H1 (cell line): ENCODE measurements at regions of chr5 and their contacts with region 1.

Region 1: DNA sequence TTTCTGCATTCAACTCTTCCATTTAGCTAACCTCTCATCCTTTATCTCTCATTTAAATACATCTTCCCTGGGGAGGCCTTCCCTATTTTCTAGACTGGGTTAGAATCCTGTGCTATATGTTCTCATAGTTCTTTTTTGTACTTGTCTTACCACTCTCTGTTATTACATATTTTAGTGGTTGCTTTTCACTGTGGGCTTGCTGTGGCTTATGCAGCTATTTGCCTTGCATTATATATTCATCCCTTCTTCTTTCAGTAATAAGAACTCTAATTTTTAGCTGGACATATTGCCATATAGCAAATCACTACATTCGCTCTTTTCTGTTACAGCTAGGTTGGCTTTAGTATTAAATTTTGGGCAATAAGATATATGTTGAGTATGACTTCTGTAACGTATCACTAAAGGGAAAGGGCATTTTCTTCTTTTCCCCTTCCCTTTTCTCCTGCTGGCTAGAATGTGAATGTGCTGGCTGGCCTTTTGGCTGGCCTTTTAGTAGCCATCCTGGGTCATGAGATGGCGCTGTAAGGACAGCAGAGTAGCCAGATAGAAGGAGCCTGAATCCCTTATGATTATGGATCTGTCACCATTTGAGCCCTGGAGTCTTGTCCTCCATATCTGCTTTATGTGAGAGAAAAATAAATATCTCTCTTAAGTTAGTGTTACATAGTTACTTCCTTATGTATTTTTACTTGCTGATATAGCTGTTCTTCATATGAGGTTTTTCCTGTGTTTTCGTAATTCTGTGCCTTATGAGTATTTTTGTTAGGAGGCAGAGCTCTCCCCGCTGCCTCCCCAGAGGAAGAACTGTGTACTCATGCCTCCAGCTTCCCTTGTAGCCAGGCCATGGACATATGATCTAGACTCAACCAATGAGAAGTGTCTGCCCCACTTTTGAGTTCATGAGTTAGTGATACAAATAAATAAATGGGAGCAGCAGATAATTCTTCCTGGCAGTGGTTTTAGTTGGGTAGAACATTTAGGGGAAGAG is 65.8 kb downstream of the NDUFAF2 start:
- DNase-seq: peak in 1 of 2 experiments; percentile 13
- H3K4me3 ChIP-seq: no peak overlapping the region
- H3K27ac ChIP-seq: no peak overlapping the region
- H3K4me1 ChIP-seq: no peaks in the 10 kb centered on the region
- H3K27me3 ChIP-seq: no peaks in the 10 kb centered on the region
- CTCF ChIP-seq: peak; percentile 58 to 98 (median 89)
- EP300 ChIP-seq: no peak
- POLR2A ChIP-seq: no peak
- RAD21 ChIP-seq: peak; percentile 76 to 80

Region 2: DNA sequence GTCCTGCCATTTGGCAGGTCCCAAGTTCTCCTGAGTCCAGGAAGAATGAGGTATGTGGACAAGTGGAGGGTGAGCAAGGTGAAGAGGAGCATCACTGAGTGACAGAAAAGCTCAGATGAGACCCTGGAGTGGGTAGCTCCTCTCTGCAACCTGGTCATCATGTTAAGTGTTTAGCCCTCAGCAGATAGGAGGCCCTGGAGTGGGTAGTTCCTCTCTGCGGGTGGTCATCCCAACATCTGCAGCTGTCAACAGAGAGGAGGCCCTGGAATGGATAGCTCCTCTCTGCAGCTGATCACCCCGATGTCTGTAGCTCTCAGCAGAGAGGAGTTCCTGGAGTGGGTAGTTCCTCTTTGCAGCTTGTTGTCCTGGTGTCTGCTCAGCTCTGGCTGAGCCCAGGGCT is 17.3 kb before region 1 on chr5:
- CTCF ChIA-PET with region 1: interaction called, 15 read pairs
- POLR2A ChIA-PET with region 1: no interaction called
- DNase-seq: no peak
- H3K4me3 ChIP-seq: no peak overlapping the region
- H3K27ac ChIP-seq: no peak overlapping the region
- H3K4me1 ChIP-seq: no peaks in the 10 kb centered on the region
- H3K27me3 ChIP-seq: no peaks in the 10 kb centered on the region
- CTCF ChIP-seq: no peak
- EP300 ChIP-seq: no peak
- POLR2A ChIP-seq: no peak
- RAD21 ChIP-seq: no peak

Region 3: DNA sequence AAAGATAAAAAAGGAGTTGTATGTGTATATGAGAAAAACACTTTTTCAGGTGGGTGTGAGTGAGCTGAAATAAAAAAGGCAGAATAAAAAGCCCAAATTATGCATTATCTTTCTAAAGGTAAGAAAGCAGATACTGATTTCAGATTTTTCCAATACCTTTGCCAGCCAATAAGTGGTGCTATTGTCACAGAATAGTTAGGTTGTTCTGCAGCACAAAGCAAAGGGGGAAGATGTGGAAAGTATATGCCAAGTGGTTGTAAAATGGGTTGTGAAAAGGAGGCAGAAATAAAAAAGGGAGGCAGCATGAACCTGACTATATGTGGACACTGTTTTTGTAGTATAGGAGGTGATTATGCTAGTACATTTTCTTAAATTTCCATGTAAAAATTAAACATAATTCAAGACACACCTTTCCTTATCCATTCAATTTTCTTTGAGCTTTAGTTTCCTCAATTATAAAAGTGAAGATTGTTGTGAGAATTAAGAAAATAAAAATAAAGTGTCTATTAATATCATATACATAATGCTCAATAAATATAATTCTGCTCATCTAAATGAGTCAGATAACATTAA is 44.8 kb after region 1 on chr5:
- CTCF ChIA-PET with region 1: interaction called, 12 read pairs
- POLR2A ChIA-PET with region 1: no interaction called
- DNase-seq: no peak
- H3K4me3 ChIP-seq: no peak overlapping the region
- H3K27ac ChIP-seq: no peak overlapping the region
- H3K4me1 ChIP-seq: peaks cover 0 to 2% (median 1%) of the 10 kb centered on the region in 4 experiments; a peak in 2 of 7 replicates
- H3K27me3 ChIP-seq: peaks cover 0 to 1% (median 0%) of the 10 kb centered on the region in 4 experiments; a peak in 1 of 7 replicates
- CTCF ChIP-seq: peak in 2 of 3 experiments; percentile 64 to 78; a peak in 3 of 4 replicates
- EP300 ChIP-seq: no peak
- POLR2A ChIP-seq: no peak
- RAD21 ChIP-seq: peak; percentile 89 to 90

Region 4: GRCh38 chr5:61089351-61089750 is 78.6 kb after region 1 on chr5:
- CTCF ChIA-PET with region 1: no interaction called
- POLR2A ChIA-PET with region 1: no interaction called
- DNase-seq: no peak
- H3K4me3 ChIP-seq: no peak overlapping the region
- H3K27ac ChIP-seq: no peak overlapping the region
- H3K4me1 ChIP-seq: no peaks in the 10 kb centered on the region
- H3K27me3 ChIP-seq: peaks cover 0 to 1% (median 0%) of the 10 kb centered on the region in 4 experiments; a peak in 1 of 7 replicates
- CTCF ChIP-seq: no peak
- EP300 ChIP-seq: no peak
- POLR2A ChIP-seq: no peak
- RAD21 ChIP-seq: no peak

Region 5: GRCh38 chr5:61254969-61255555 is 244.3 kb after region 1 on chr5:
- CTCF ChIA-PET with region 1: no interaction called
- POLR2A ChIA-PET with region 1: no interaction called
- DNase-seq: no peak
- H3K4me3 ChIP-seq: no peak overlapping the region
- H3K27ac ChIP-seq: no peak overlapping the region
- H3K4me1 ChIP-seq: no peaks in the 10 kb centered on the region
- H3K27me3 ChIP-seq: no peaks in the 10 kb centered on the region
- CTCF ChIP-seq: no peak
- EP300 ChIP-seq: no peak
- POLR2A ChIP-seq: no peak
- RAD21 ChIP-seq: no peak

Region 6: DNA sequence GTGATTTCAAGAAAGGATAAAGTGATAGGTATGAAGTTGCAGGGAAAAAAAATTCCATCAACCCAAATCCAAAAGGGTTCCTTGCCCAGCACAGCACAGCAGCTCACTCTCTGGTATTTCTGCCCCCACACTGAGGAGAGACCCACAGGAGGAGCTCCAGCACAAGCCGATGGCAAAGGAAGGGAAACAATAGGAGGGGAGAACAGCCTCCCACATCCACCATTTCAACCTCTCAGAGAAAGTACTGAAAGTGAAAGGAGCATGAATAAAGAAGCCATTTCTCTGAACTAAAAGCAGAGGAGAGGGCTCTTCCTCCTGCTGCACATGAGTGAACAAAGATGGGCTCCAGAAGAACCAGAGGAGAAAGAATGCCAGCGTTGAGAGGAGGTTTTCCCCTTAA is 266.4 kb after region 1 on chr5:
- CTCF ChIA-PET with region 1: no interaction called
- POLR2A ChIA-PET with region 1: no interaction called
- DNase-seq: no peak
- H3K4me3 ChIP-seq: no peak overlapping the region
- H3K27ac ChIP-seq: no peak overlapping the region
- H3K4me1 ChIP-seq: peaks cover 0 to 8% (median 2%) of the 10 kb centered on the region in 4 experiments; a peak in 4 of 7 replicates
- H3K27me3 ChIP-seq: no peaks in the 10 kb centered on the region
- CTCF ChIP-seq: peak; percentile 30 to 49 (median 33); a peak in 3 of 4 replicates
- EP300 ChIP-seq: no peak
- POLR2A ChIP-seq: no peak
- RAD21 ChIP-seq: peak; percentile 62 to 65